ENCODE measurements at regions of chr3 and their contacts with region 1.

Region 1: GRCh38 chr3:30628901-30629590 is 22.6 kb downstream of the TGFBR2 start:
- DNase-seq: peak in 1 of 2 experiments; percentile 27
- H3K4me3 ChIP-seq: no peak overlapping the region
- H3K4me3 Mint-ChIP-seq: peak overlapping the region; percentile 16
- H3K27ac Mint-ChIP-seq: peak overlapping the region; percentile 79
- H3K4me1 ChIP-seq: peaks cover 75% of the 10 kb centered on the region
- H3K4me1 Mint-ChIP-seq: peaks cover 54% of the 10 kb centered on the region
- H3K27me3 ChIP-seq: no peaks in the 10 kb centered on the region
- H3K27me3 Mint-ChIP-seq: no peaks in the 10 kb centered on the region
- CTCF ChIP-seq: peak in 1 of 2 experiments; percentile 11

Region 2: GRCh38 chr3:30199096-30199759 is 429.8 kb before region 1 on chr3:
- CTCF ChIA-PET with region 1: no interaction called
- POLR2A ChIA-PET with region 1: no interaction called
- intact Hi-C with region 1: loop called (anchors 1 kb)
- DNase-seq: peak; percentile 59 to 72
- H3K4me3 ChIP-seq: no peak overlapping the region
- H3K4me3 Mint-ChIP-seq: no peak overlapping the region
- H3K27ac Mint-ChIP-seq: no peak overlapping the region
- H3K4me1 ChIP-seq: peaks cover 34% of the 10 kb centered on the region
- H3K4me1 Mint-ChIP-seq: peaks cover 19% of the 10 kb centered on the region
- H3K27me3 ChIP-seq: no peaks in the 10 kb centered on the region
- H3K27me3 Mint-ChIP-seq: no peaks in the 10 kb centered on the region
- CTCF ChIP-seq: peak; percentile 68 to 72

Region 3: GRCh38 chr3:30437171-30437601 is 191.9 kb before region 1 on chr3:
- CTCF ChIA-PET with region 1: no interaction called
- POLR2A ChIA-PET with region 1: no interaction called
- intact Hi-C with region 1: loop called (anchors 10 kb)
- DNase-seq: no peak
- H3K4me3 ChIP-seq: no peak overlapping the region
- H3K4me3 Mint-ChIP-seq: no peak overlapping the region
- H3K27ac Mint-ChIP-seq: no peak overlapping the region
- H3K4me1 ChIP-seq: peaks cover 16% of the 10 kb centered on the region
- H3K4me1 Mint-ChIP-seq: peaks cover 21% of the 10 kb centered on the region
- H3K27me3 ChIP-seq: no peaks in the 10 kb centered on the region
- H3K27me3 Mint-ChIP-seq: no peaks in the 10 kb centered on the region
- CTCF ChIP-seq: no peak

Region 4: GRCh38 chr3:30597131-30597768 is 31.8 kb before region 1 on chr3:
- CTCF ChIA-PET with region 1: no interaction called
- POLR2A ChIA-PET with region 1: no interaction called
- intact Hi-C with region 1: loop called (anchors 1 kb)
- DNase-seq: peak; percentile 63 to 79
- H3K4me3 ChIP-seq: no peak overlapping the region
- H3K4me3 Mint-ChIP-seq: peak overlapping the region; percentile 31
- H3K27ac Mint-ChIP-seq: peak overlapping the region; percentile 89
- H3K4me1 ChIP-seq: peaks cover 45% of the 10 kb centered on the region
- H3K4me1 Mint-ChIP-seq: peaks cover 16% of the 10 kb centered on the region
- H3K27me3 ChIP-seq: no peaks in the 10 kb centered on the region
- H3K27me3 Mint-ChIP-seq: no peaks in the 10 kb centered on the region
- CTCF ChIP-seq: no peak

Region 5: DNA sequence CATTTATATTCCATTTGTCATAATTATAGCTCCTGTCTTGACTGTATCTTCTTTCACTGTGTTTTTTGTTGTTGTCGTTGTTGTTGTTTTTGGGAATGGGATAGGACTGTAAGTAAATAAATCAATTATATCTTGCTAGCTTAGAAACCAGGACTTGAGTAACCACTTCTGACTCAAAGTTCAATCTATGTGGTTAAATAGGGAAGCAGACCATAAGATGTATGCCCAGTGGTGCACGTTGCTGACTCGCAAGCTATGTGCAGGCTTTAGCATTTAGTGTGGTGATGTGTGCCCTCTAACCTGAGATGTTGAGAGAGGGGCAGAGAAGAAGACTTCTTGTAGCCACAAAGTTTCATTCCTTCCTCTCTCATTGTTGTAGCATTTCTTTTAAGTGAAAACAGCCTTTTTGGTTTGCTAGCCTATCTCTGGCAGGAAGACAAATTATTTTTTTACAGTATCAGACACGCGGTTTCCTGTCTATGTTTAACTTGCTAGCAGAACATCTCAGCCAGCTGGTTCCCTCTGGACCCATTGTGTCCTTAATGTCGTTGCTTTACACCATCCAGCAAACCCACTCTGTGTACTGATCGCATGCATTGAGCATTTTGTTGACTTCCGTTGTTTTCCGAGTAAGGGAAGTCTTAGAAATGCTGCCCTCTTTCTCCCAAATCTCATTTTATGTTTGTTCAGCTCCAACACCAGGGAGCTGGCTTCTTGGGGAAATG is 29.4 kb after region 1 on chr3:
- CTCF ChIA-PET with region 1: no interaction called
- POLR2A ChIA-PET with region 1: no interaction called
- intact Hi-C with region 1: loop called (anchors 1 kb)
- DNase-seq: no peak
- H3K4me3 ChIP-seq: no peak overlapping the region
- H3K4me3 Mint-ChIP-seq: peak overlapping the region; percentile 5
- H3K27ac Mint-ChIP-seq: peak overlapping the region; percentile 46
- H3K4me1 ChIP-seq: peaks cover 49% of the 10 kb centered on the region
- H3K4me1 Mint-ChIP-seq: peaks cover 60% of the 10 kb centered on the region
- H3K27me3 ChIP-seq: no peaks in the 10 kb centered on the region
- H3K27me3 Mint-ChIP-seq: no peaks in the 10 kb centered on the region
- CTCF ChIP-seq: no peak

Measured in Caco-2 (cell line).